Activated CD4-positive, alpha-beta T cell treated with anti-CD3 and anti-CD28 coated beads, Interleukin-2, amount 10 ng/mL, durations not matched to agents 7 days and 5 days (primary cell): ENCODE measurements at regions of chr5 and their contacts with region 1.

Region 1: DNA sequence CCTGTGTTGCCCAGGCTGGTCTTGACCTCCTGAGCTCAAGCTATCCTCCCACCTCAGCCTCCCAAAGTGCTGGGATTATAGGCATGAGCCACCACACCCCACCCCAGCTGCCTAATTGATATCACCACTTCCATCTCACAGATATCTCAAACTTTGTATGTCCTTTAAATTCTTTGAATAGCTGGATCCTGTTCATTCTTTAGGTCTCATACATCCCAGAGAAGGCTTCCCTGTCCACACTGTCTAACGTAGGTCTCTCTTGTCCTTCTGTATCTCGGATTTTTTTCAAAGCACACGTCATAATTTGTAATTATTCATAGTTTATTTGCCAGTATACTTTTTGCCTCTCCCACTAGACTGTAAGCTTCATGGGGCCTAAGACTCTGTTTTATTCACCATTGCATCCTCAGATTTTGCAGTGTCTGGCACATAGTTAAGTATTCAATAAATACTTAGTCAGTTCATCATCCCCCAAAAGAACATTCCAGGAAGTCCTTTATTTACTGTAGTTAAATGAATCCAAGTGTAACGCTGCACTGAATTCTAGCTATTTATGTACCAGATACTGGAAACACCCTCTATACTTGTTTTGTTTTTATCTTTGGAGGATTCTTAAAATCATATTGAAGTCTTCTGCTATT is 10.5 kb downstream of the ARSK start:
- DNase-seq: no peak
- H3K4me3 Mint-ChIP-seq: no peak overlapping the region
- H3K27ac Mint-ChIP-seq: no peak overlapping the region
- H3K4me1 Mint-ChIP-seq: no peaks in the 10 kb centered on the region
- H3K27me3 Mint-ChIP-seq: no peaks in the 10 kb centered on the region

Region 2: GRCh38 chr5:95646554-95647431 is 81.4 kb after region 1 on chr5 and contains the start of gene RFESD:
- CTCF ChIA-PET with region 1: no interaction called
- POLR2A ChIA-PET with region 1: interaction called, 15 read pairs
- DNase-seq: peak; percentile 96
- H3K4me3 Mint-ChIP-seq: peak within 1 kb of the TSS; percentile 81
- H3K27ac Mint-ChIP-seq: peak within 1 kb of the TSS; percentile 95
- H3K4me1 Mint-ChIP-seq: peaks cover 52% of the 10 kb centered on the region
- H3K27me3 Mint-ChIP-seq: no peaks in the 10 kb centered on the region
- total RNA-seq, gene RFESD: 5.9 to 6.2 TPM